Activated CD4-positive, alpha-beta T cell treated with anti-CD3 and anti-CD28 coated beads, Interleukin-2, amount 10 ng/mL, durations not matched to agents 24 days and 14 days (primary cell): ENCODE measurements at regions of chr20 and their contacts with region 1.

Region 1: DNA sequence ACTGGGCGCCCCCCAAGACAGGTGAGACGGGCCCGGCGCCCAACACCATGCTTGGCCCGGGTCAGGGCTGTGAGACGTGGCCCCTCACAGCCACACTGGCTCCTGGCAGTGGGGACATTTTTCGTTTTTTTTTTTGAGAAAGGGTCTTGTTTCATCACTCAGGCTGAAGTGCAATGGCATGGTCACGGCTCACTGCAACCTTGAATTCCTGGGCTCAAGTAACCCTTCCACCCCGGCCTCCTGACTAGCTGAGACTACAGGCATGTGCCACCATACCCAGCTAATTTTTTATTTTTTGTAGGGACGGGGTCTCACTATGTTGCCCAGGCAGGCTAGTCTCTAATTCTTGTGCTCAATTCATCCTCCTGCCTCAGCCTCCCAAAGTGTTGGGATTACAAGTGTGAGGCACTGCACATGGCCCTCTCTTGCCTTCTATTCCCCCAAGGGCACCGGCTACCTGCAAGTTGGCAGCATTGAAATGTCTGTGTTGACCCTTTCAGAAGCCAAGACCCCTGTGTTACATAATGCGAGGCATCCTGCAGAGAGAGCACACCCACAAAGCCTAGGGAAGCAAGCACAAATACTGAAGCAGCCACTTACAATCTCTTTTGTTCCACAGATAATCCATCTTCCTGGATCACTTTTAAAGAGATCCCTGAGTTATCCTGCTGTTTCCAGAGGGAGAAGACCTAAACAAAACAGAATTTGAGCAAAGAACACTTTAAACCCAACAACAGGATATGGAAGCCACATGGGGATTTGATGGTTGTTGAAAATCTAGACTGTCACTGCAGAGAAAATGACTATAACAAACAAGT is 57.5 kb upstream of the SLC4A11 start:
- DNase-seq: no peak
- H3K4me3 Mint-ChIP-seq: no peak overlapping the region
- H3K27ac Mint-ChIP-seq: no peak overlapping the region
- H3K4me1 Mint-ChIP-seq: no peaks in the 10 kb centered on the region
- H3K27me3 Mint-ChIP-seq: no peaks in the 10 kb centered on the region

Region 2: DNA sequence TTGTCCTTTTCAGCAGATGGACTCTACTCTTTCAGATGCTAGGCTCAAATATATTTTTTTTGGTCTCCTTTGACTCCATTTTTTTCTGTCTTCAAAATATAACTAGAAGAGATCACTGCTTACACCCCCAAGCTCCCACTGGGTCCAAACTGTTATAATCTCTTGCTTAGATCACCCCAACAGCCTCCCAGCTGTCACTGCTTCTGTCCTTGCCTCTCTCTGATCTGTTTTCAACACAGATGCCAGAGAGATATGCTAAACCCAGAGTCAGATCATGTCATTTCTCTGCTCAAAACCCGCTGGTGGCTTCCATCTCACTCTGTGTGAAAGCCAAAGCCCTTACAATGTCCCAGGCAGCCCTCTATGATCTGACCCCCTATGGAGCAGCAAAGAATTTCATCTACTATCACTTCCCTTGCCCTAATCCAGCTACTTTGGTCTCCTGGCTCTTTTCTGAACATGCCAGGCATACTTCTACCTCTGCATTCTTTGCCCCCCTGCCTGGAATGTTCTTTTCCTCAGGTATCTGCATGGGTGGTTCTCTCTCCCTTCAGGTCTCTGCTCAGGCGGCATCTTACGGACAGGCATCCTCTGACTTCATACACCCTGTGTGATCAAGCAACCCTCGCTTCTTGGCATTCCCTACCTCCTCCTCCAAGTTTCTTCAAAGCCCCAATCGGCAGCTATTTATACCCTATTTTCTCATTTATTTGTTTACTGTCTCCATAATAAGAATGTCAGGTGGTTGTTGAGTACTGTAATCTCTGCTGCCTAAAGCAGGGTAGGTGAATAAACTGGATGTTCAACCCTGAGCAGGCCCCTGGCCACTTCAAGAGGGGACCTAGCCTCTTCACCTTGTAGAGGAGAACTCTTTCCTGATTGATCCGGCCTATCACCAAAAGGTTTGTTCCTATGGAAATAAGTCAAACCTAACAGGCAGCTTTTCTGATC is 13.9 kb before region 1 on chr20:
- intact Hi-C with region 1: loop called (anchors 1 kb)
- DNase-seq: no peak
- H3K4me3 Mint-ChIP-seq: no peak overlapping the region
- H3K27ac Mint-ChIP-seq: no peak overlapping the region
- H3K4me1 Mint-ChIP-seq: no peaks in the 10 kb centered on the region
- H3K27me3 Mint-ChIP-seq: no peaks in the 10 kb centered on the region